H1 (cell line): ENCODE measurements at regions of chr7 and their contacts with region 1.

Region 1: DNA sequence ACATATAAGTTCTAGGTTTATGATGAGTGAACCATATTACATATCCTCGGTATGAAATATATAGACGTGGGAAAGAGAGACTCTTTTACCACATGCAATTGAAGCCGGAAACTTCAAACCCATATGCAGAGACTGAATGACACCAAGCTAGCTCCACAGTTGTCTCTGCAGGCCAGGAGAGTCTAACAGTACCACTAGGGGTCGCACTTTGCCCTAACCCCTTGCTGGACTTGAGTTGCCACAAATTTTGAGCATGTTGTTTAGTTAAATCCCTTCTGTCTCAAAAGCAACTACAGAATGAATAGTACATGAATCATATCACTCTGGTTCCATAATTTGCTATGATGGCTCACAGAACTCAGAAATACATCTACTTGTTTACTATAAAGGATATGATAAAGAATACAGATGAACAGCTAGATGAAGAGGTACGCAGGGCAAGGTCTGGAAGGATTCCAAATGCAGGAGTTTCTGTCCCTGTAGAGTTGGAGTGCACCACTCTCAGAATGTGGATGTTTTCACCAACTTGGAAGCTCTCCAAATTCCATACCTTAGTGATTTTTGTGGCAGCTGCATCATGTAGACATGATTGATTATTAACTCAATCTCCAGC is 112.4 kb upstream of the YAE1 start:
- DNase-seq: peak; percentile 47 to 78
- H3K4me3 ChIP-seq: no peak overlapping the region
- H3K27ac ChIP-seq: no peak overlapping the region
- H3K4me1 ChIP-seq: no peaks in the 10 kb centered on the region; a peak in 1 of 7 replicates
- H3K27me3 ChIP-seq: no peaks in the 10 kb centered on the region
- CTCF ChIP-seq: peak; percentile 77 to 95 (median 78)
- EP300 ChIP-seq: no peak
- POLR2A ChIP-seq: no peak
- RAD21 ChIP-seq: peak; percentile 66 to 77

Region 2: GRCh38 chr7:39383136-39383535 is 70.7 kb before region 1 on chr7:
- CTCF ChIA-PET with region 1: interaction called, 10 read pairs
- POLR2A ChIA-PET with region 1: no interaction called
- DNase-seq: no peak
- H3K4me3 ChIP-seq: no peak overlapping the region
- H3K27ac ChIP-seq: no peak overlapping the region
- H3K4me1 ChIP-seq: no peaks in the 10 kb centered on the region
- H3K27me3 ChIP-seq: no peaks in the 10 kb centered on the region
- CTCF ChIP-seq: no peak
- EP300 ChIP-seq: no peak
- POLR2A ChIP-seq: no peak
- RAD21 ChIP-seq: no peak

Region 3: DNA sequence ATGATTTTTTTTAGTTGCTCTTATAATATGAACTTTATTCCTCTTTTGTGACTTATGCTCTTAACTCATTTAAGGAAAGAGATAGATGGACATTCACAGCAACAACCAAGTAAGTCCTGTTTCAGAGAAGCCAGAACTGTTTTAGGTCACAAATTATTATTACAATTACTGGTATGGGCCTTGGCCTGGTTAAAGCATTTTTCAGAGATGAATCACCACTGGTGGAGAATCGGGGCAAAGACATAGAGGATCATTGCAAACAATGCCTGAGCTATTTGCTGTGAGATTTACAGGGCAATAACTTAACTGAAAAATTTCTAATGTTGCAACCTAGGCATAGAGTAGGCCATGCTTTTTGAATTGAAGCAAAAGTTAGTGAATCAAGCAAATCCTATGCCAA is 25.6 kb before region 1 on chr7:
- CTCF ChIA-PET with region 1: interaction called, 11 read pairs
- POLR2A ChIA-PET with region 1: no interaction called
- DNase-seq: no peak
- H3K4me3 ChIP-seq: no peak overlapping the region
- H3K27ac ChIP-seq: no peak overlapping the region
- H3K4me1 ChIP-seq: peaks cover 0 to 8% (median 1%) of the 10 kb centered on the region in 4 experiments; a peak in 5 of 7 replicates
- H3K27me3 ChIP-seq: no peaks in the 10 kb centered on the region
- CTCF ChIP-seq: no peak
- EP300 ChIP-seq: no peak
- POLR2A ChIP-seq: no peak
- RAD21 ChIP-seq: no peak

Region 4: GRCh38 chr7:39433550-39433949 is 20.3 kb before region 1 on chr7:
- CTCF ChIA-PET with region 1: interaction called, 67 read pairs
- POLR2A ChIA-PET with region 1: no interaction called
- DNase-seq: no peak
- H3K4me3 ChIP-seq: no peak overlapping the region
- H3K27ac ChIP-seq: no peak overlapping the region
- H3K4me1 ChIP-seq: peaks cover 0 to 11% (median 3%) of the 10 kb centered on the region in 4 experiments; a peak in 6 of 7 replicates
- H3K27me3 ChIP-seq: no peaks in the 10 kb centered on the region
- CTCF ChIP-seq: no peak
- EP300 ChIP-seq: no peak
- POLR2A ChIP-seq: no peak
- RAD21 ChIP-seq: no peak

Region 5: GRCh38 chr7:39464350-39465054 is 10.7 kb after region 1 on chr7:
- CTCF ChIA-PET with region 1: interaction called, 49 read pairs
- POLR2A ChIA-PET with region 1: no interaction called
- DNase-seq: no peak
- H3K4me3 ChIP-seq: no peak overlapping the region
- H3K27ac ChIP-seq: no peak overlapping the region
- H3K4me1 ChIP-seq: peaks cover 0 to 4% (median 2%) of the 10 kb centered on the region in 4 experiments; a peak in 6 of 7 replicates
- H3K27me3 ChIP-seq: no peaks in the 10 kb centered on the region
- CTCF ChIP-seq: no peak
- EP300 ChIP-seq: no peak
- POLR2A ChIP-seq: no peak
- RAD21 ChIP-seq: no peak